H1 (cell line): ENCODE measurements at regions of chr11 and their contacts with region 1.

Region 1: DNA sequence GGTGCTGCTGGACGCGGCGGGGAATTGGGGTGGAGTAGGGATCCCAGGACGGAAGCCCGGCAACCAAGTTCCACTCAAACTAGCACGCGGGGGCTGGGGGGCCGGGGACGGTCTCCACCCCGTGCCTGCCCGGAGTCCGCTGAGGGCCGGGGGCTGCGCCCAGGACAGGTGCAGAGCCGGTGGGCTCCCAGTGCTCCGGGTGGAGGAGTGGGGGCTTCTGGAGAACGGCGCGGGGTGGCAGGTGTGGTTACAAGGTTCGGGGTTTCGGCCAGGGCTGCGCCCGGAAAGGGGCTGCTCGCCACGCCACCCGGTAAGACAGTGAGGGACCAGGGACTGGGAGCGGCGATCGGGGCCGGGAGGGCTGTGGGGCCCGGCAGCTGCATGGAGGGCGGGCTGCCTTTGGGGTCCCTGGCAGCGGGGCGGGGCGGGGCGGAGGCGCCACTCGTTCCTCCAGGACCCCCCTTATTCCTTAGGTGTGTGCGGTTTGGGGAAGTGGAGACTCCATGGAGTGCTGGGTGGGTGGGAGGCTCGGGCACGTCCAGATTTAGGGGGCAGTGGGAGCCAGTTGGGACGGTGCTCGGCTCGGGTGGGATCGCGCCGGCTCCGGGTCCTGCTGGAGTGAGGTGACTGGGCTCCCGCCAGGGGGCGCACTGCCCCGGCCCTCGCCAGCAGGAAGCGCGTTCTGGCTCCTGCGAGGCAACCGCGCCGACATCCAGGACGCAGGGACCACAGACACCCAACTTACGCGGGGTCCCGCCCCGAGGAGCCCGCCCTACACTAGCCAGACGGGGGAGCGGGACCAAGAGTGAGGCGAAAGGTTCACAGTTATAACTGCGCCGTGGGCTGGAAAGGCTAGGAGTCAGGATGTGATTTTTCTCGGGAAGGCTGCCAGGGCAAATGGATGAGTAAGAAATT is 868 bp downstream of the TSPAN18 start:
- DNase-seq: peak in 1 of 2 experiments; percentile 93
- H3K4me3 ChIP-seq: peak overlapping the region; percentile 14 to 73 (median 50)
- H3K27ac ChIP-seq: no peak overlapping the region
- H3K4me1 ChIP-seq: peaks cover 24 to 41% (median 26%) of the 10 kb centered on the region in 4 experiments
- H3K27me3 ChIP-seq: peaks cover 26 to 66% (median 57%) of the 10 kb centered on the region in 4 experiments
- CTCF ChIP-seq: peak; percentile 81 to 94 (median 89)
- EP300 ChIP-seq: no peak
- POLR2A ChIP-seq: no peak
- RAD21 ChIP-seq: peak; percentile 80 to 85

Region 2: DNA sequence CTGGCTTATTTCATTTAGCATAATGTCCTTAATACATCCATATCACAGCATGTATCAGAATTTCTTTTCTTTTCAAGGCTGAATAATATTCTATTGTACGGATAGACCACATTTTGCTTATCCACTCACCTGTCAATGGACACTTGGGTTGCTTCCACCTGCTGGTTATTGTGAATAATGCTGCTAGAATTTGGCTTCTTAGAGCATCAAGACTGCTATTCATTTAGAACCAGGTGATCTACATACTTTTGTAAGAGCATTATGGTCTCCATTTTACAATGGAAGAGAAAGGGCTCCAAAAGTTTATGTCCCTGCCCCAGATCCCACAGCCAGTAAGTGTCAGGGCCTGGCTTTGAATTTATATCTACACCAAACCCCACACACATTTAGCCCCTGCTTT is 262.9 kb before region 1 on chr11:
- CTCF ChIA-PET with region 1: no interaction called
- POLR2A ChIA-PET with region 1: no interaction called
- DNase-seq: no peak
- H3K4me3 ChIP-seq: no peak overlapping the region
- H3K27ac ChIP-seq: no peak overlapping the region
- H3K4me1 ChIP-seq: peaks cover 6 to 12% (median 7%) of the 10 kb centered on the region in 4 experiments
- H3K27me3 ChIP-seq: no peaks in the 10 kb centered on the region
- CTCF ChIP-seq: peak in 2 of 3 experiments; percentile 30 to 40; a peak in 2 of 4 replicates
- EP300 ChIP-seq: no peak
- POLR2A ChIP-seq: no peak
- RAD21 ChIP-seq: peak in 1 of 2 experiments; percentile 10; a peak in 1 of 4 replicates

Region 3: DNA sequence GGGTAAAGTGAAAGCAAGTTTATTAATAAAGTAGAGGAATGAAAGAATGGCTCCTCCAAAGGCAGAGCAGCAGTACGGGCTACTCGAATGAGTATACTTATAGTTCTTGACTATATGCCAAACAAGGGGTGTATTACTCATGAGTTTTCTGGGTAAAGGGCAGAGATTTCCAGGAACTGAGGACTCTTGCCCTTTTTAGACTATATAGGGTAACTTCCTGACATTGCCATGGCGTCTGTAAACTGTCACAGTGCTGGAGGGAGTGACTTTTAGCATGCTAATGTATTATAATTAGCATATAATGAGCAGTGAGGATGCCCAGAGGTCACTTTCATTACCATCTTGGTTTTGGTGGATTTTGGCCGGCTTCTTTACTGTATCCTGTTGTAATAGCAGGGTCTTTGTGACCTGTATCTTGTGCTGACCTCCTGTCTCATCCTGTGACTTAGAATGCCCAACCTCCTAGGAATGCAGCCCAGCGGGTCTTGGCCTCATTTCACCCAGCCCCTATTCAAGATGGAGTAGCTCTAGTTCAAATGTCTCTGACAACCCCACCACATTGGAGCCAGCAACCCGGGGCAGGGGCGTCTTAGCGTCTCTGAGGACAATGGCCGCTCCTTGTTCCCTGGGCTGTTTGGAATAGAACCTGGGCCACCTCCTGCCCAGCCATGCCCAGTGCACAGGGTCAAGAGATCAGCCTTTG is 197.1 kb before region 1 on chr11:
- CTCF ChIA-PET with region 1: no interaction called
- POLR2A ChIA-PET with region 1: no interaction called
- DNase-seq: no peak
- H3K4me3 ChIP-seq: no peak overlapping the region
- H3K27ac ChIP-seq: no peak overlapping the region
- H3K4me1 ChIP-seq: peaks cover 0 to 2% (median 0%) of the 10 kb centered on the region in 4 experiments; a peak in 5 of 7 replicates
- H3K27me3 ChIP-seq: no peaks in the 10 kb centered on the region
- CTCF ChIP-seq: no peak
- EP300 ChIP-seq: no peak
- POLR2A ChIP-seq: no peak
- RAD21 ChIP-seq: no peak

Region 4: DNA sequence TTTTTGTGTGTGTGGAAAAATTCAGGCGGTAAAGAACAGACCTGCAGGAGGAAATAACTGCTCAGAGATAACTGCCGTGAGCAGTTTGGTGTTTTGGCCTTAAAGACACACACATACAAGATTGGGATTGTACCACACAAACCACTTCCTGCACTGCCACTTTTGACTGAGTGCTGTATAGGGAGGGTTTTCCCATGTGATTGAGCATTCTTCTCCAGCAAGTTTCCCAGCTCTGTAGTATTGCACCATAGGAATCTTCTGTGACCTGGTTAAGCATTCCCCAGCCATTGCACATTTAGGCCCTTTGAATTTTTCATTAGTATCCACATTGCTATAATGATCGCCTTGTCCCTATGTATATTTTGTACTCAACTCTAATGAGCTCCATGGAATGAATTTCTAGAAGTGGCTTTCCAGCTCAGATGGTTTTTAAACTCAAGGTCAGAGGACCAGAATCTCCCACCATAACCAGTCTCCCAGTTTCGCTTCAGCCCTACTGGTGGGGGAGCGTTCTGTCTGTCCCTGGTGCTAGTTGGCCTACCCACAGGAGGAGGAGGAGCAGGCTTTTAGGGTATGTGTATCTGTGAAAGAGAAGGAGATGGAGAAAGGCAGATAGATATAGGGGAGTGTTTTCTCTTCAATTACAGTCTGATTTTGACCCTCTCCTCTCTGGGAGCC is 152.9 kb before region 1 on chr11:
- CTCF ChIA-PET with region 1: no interaction called
- POLR2A ChIA-PET with region 1: no interaction called
- DNase-seq: no peak
- H3K4me3 ChIP-seq: no peak overlapping the region
- H3K27ac ChIP-seq: no peak overlapping the region
- H3K4me1 ChIP-seq: peaks cover 0 to 4% (median 0%) of the 10 kb centered on the region in 4 experiments; a peak in 3 of 7 replicates
- H3K27me3 ChIP-seq: no peaks in the 10 kb centered on the region; a peak in 1 of 7 replicates
- CTCF ChIP-seq: no peak
- EP300 ChIP-seq: no peak
- POLR2A ChIP-seq: no peak
- RAD21 ChIP-seq: no peak

Region 5: GRCh38 chr11:44709966-44710365 is 17.7 kb before region 1 on chr11:
- CTCF ChIA-PET with region 1: interaction called, 15 read pairs
- POLR2A ChIA-PET with region 1: interaction called, 3 read pairs
- DNase-seq: no peak
- H3K4me3 ChIP-seq: no peak overlapping the region
- H3K27ac ChIP-seq: no peak overlapping the region
- H3K4me1 ChIP-seq: peaks cover 8 to 10% (median 10%) of the 10 kb centered on the region in 4 experiments
- H3K27me3 ChIP-seq: 0 out of 7 replicates have a peak, but pooled peaks cover 0 to 6% (median 0%) of the 10 kb centered on the region in 4 experiments
- CTCF ChIP-seq: no peak
- EP300 ChIP-seq: no peak
- POLR2A ChIP-seq: no peak
- RAD21 ChIP-seq: no peak

Region 6: DNA sequence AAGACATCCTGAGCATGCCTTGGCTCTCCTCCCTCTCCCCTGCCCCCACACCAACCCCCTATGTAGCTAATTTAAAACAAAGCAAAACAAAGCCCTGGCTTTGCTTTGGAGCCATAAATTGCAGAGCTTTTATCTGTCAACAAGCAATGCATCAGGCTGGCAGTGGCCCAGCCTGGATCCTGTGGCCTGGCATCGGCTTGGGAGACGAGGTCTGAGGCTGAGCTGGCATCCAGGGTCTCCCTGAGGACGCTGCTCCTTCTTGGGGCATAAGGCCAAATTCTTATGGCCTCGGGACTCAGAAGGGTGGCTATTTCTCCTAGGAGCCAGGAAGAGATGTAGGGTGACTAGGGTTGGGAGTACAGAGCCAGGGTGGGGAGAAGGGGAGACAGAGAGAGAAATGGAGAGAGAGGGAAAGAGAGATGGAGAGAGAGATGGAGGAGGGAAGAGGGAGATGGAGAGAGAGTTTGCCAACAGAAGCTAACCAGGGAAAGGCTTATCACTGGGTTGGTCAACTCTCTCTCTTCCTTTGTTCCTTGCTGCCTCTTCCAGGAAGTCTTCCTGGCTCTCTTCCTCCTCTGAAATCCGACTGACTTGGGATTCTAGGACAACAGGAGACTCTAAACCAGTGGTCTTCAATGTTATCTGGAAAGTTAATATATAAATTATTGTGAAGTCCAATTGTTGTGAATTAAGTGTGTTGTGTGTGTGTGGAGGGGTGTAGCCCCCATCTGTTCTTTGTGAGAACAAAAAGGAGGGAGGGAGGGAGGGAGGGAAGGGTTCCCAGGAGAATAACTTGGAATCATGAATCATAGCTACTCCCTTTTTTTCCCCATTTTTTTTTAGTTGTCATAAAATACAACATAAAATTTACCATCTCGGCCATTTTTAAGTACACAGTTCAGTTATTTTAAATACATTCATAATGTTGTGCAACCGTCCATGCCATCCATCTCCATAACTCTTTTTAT is 28.2 kb after region 1 on chr11:
- CTCF ChIA-PET with region 1: interaction called, 15 read pairs
- POLR2A ChIA-PET with region 1: interaction called, 4 read pairs
- DNase-seq: no peak
- H3K4me3 ChIP-seq: peak overlapping the region in 1 of 4 experiments; percentile 16; a peak in 1 of 8 replicates
- H3K27ac ChIP-seq: no peak overlapping the region
- H3K4me1 ChIP-seq: peaks cover 16 to 37% (median 22%) of the 10 kb centered on the region in 4 experiments
- H3K27me3 ChIP-seq: peaks cover 4 to 30% (median 25%) of the 10 kb centered on the region in 4 experiments
- CTCF ChIP-seq: no peak
- EP300 ChIP-seq: no peak
- POLR2A ChIP-seq: no peak
- RAD21 ChIP-seq: no peak

Region 7: GRCh38 chr11:44760917-44761550 is 33.4 kb after region 1 on chr11:
- CTCF ChIA-PET with region 1: interaction called, 15 read pairs
- POLR2A ChIA-PET with region 1: interaction called, 4 read pairs
- DNase-seq: peak; percentile 61 to 68
- H3K4me3 ChIP-seq: no peak overlapping the region
- H3K27ac ChIP-seq: no peak overlapping the region
- H3K4me1 ChIP-seq: peaks cover 9 to 22% (median 14%) of the 10 kb centered on the region in 4 experiments
- H3K27me3 ChIP-seq: peaks cover 0 to 9% (median 6%) of the 10 kb centered on the region in 4 experiments; a peak in 5 of 7 replicates
- CTCF ChIP-seq: peak; percentile 75 to 86 (median 85)
- EP300 ChIP-seq: no peak
- POLR2A ChIP-seq: no peak
- RAD21 ChIP-seq: peak; percentile 88 to 90

Region 8: GRCh38 chr11:45209891-45210699 is 482.5 kb after region 1 on chr11:
- CTCF ChIA-PET with region 1: no interaction called
- POLR2A ChIA-PET with region 1: no interaction called
- DNase-seq: peak in 1 of 2 experiments; percentile 70
- H3K4me3 ChIP-seq: no peak overlapping the region
- H3K27ac ChIP-seq: no peak overlapping the region
- H3K4me1 ChIP-seq: peaks cover 3 to 22% (median 14%) of the 10 kb centered on the region in 4 experiments
- H3K27me3 ChIP-seq: no peaks in the 10 kb centered on the region
- CTCF ChIP-seq: no peak
- EP300 ChIP-seq: peak; percentile 66 to 89; a peak in 1 of 3 replicates
- POLR2A ChIP-seq: peak in 1 of 2 experiments; percentile 39; a peak in 1 of 3 replicates
- RAD21 ChIP-seq: no peak